ENCODE measurements at regions of chr9 and their contacts with region 1.

Region 1: GRCh38 chr9:106921341-106921899 is 58.5 kb downstream of the ZNF462 start:
- DNase-seq: no peak
- ATAC-seq: peak; percentile 91
- H3K4me3 ChIP-seq: no peak overlapping the region
- H3K27ac ChIP-seq: no peak overlapping the region
- H3K4me1 ChIP-seq: no peaks in the 10 kb centered on the region
- H3K27me3 ChIP-seq: no peaks in the 10 kb centered on the region
- CTCF ChIP-seq: no peak
- EP300 ChIP-seq: peak in 1 of 2 experiments; percentile 39; a peak in 2 of 4 replicates
- POLR2A ChIP-seq: no peak
- RAD21 ChIP-seq: no peak

Region 2: DNA sequence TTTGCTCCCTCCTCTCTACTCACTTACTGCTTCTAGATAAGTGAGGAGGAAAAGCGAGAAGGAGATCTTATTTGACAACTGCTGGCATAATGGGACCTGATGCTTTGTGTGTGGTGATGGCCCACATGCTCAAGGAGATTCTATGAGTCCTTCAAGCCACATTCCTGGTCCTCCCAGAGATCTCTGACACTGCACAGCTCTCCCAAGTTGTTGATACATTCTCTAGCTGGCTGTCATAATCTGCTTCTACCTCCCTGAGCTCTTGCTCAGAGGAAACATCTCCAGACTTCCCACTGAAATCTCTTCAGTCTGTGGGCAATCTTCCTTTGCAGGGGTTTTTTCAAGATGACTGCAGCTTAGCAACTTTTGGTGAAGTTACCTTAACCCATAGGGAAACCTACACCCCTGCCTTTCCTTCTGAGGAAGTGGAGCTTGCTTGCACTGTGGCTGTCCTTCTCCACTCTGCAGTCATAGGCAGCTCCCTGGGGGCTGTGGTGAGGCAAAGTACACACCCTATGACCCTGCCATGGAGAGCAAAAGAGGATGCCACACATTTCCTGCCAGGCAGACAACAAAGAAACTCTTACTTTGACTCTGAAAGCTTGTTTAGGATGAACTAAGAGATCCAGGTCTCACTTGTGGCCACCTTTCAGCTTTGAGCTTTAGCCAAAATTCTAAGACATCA is 1063.3 kb before region 1 on chr9:
- CTCF ChIA-PET with region 1: no interaction called
- POLR2A ChIA-PET with region 1: no interaction called
- RAD21 ChIA-PET with region 1: no interaction called
- SMC1A ChIA-PET with region 1: no interaction called
- in situ Hi-C with region 1: no loop called
- intact Hi-C with region 1: no loop called
- DNase-seq: no peak
- ATAC-seq: peak; percentile 55
- H3K4me3 ChIP-seq: no peak overlapping the region
- H3K27ac ChIP-seq: no peak overlapping the region
- H3K4me1 ChIP-seq: no peaks in the 10 kb centered on the region
- H3K27me3 ChIP-seq: no peaks in the 10 kb centered on the region
- CTCF ChIP-seq: no peak
- EP300 ChIP-seq: no peak
- POLR2A ChIP-seq: no peak
- RAD21 ChIP-seq: no peak

Region 3: DNA sequence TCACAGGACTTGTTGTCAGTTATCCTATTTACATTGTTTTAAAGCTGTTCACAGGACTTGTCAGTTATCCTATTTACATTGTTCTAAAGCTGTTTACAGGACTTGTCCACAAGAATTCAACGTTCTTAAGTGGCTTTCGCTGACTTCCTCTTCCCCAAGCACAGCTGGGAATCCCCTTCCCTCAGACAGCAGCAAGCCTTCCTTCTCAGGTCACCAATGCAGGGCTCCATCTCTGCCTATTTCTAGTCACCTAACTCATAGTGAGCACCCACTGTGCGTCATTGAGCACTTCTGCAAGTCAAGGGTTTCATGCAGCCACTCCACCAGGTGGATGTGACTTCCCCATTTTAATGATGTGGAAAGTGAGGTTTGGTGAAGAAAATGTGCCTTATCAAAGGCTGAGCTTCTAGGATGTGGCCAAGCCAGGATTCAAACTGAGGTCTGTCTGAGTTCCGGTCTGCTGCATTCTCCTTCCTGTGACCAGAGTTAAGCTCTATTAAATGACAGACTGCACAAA is 168.2 kb before region 1 on chr9:
- CTCF ChIA-PET with region 1: no interaction called
- POLR2A ChIA-PET with region 1: no interaction called
- RAD21 ChIA-PET with region 1: interaction called, 3 read pairs
- SMC1A ChIA-PET with region 1: no interaction called
- in situ Hi-C with region 1: no loop called
- intact Hi-C with region 1: loop called (anchors 10 kb)
- DNase-seq: peak; percentile 97
- ATAC-seq: peak; percentile 97
- H3K4me3 ChIP-seq: no peak overlapping the region
- H3K27ac ChIP-seq: peak overlapping the region; percentile 47
- H3K4me1 ChIP-seq: peaks cover 15% of the 10 kb centered on the region
- H3K27me3 ChIP-seq: no peaks in the 10 kb centered on the region
- CTCF ChIP-seq: no peak
- EP300 ChIP-seq: peak; percentile 95 to 96; a peak in 3 of 4 replicates
- POLR2A ChIP-seq: no peak
- RAD21 ChIP-seq: no peak

Region 4: DNA sequence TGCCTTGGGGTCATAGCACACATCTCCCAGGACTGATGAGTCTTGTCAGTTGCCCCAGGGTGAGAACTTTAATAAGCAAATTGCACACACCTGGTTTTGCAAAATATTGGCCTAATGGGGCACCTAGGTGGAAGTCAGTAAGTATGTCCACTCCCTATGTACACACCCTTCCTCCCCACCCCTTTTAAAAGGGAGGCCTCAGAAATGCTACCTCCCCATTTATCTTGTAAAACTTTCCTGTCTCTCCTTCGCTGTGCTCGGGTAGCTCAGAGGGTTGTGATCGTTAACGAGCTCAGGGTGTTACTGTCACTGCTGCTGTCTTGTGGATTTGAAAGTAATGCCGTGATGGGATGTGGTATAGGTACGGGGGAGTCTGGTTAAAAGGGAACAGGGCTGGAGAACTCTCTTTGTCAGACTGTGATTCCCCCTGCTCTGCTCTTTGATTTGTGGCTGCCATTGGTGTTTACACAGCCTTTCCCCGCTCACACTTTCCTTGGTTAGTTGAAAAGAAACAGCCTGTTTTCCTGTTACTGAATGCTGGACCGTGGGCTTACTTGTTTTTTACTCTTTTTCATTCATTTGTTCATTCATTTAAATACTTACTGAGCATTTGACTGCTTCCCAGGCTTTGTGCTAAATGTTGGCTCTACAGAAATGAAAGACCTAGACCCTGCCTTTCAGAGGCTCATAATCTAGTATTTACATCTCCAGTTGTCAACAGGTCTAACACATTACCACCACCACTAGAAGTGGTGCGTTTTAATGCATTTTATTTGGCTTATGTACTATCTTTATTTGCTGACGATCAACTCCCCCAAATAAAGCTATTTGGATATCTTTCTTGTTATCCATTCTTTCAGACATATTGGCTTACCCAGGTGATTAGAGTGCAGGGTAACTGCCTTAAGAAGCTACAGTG is 32.1 kb before region 1 on chr9:
- CTCF ChIA-PET with region 1: interaction called, 5 read pairs
- POLR2A ChIA-PET with region 1: no interaction called
- RAD21 ChIA-PET with region 1: interaction called, 9 read pairs
- SMC1A ChIA-PET with region 1: interaction called, 14 read pairs
- in situ Hi-C with region 1: no loop called
- intact Hi-C with region 1: no loop called
- DNase-seq: no peak
- ATAC-seq: peak; percentile 66
- H3K4me3 ChIP-seq: no peak overlapping the region
- H3K27ac ChIP-seq: no peak overlapping the region
- H3K4me1 ChIP-seq: no peaks in the 10 kb centered on the region
- H3K27me3 ChIP-seq: no peaks in the 10 kb centered on the region
- CTCF ChIP-seq: no peak
- EP300 ChIP-seq: no peak
- POLR2A ChIP-seq: no peak
- RAD21 ChIP-seq: no peak

Region 5: GRCh38 chr9:106945727-106946660 is 24.6 kb after region 1 on chr9:
- CTCF ChIA-PET with region 1: interaction called, 3 read pairs
- POLR2A ChIA-PET with region 1: no interaction called
- RAD21 ChIA-PET with region 1: interaction called, 6 read pairs
- SMC1A ChIA-PET with region 1: interaction called, 25 read pairs
- in situ Hi-C with region 1: no loop called
- intact Hi-C with region 1: no loop called
- DNase-seq: no peak
- ATAC-seq: no peak
- H3K4me3 ChIP-seq: no peak overlapping the region
- H3K27ac ChIP-seq: no peak overlapping the region
- H3K4me1 ChIP-seq: no peaks in the 10 kb centered on the region
- H3K27me3 ChIP-seq: no peaks in the 10 kb centered on the region
- CTCF ChIP-seq: no peak
- EP300 ChIP-seq: no peak
- POLR2A ChIP-seq: no peak
- RAD21 ChIP-seq: no peak

Region 6: DNA sequence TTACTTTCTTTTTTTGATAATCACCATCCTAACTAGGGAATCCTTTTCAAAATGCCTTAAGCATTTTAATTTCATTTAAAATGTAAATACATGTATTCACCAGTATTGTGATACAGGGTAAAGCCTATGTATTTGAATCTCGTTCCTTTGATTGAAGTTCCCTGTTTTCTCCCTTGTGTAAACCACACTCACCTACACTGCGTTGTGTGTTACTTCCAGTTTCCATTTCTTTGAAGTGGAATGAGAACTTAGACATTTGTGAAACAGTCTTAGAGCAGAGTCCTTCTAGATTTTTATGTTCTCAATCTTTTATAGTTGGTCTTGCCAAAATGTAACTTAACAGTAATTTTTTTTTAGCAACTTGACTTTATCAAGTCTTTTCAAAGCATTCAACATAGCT is 42.9 kb after region 1 on chr9:
- CTCF ChIA-PET with region 1: interaction called, 3 read pairs
- POLR2A ChIA-PET with region 1: no interaction called
- RAD21 ChIA-PET with region 1: interaction called, 8 read pairs
- SMC1A ChIA-PET with region 1: interaction called, 10 read pairs
- in situ Hi-C with region 1: no loop called
- intact Hi-C with region 1: no loop called
- DNase-seq: peak; percentile 44
- ATAC-seq: peak; percentile 96
- H3K4me3 ChIP-seq: no peak overlapping the region
- H3K27ac ChIP-seq: no peak overlapping the region
- H3K4me1 ChIP-seq: no peaks in the 10 kb centered on the region
- H3K27me3 ChIP-seq: no peaks in the 10 kb centered on the region
- CTCF ChIP-seq: no peak
- EP300 ChIP-seq: peak in 1 of 2 experiments; percentile 86; a peak in 3 of 4 replicates
- POLR2A ChIP-seq: no peak
- RAD21 ChIP-seq: no peak

Region 7: DNA sequence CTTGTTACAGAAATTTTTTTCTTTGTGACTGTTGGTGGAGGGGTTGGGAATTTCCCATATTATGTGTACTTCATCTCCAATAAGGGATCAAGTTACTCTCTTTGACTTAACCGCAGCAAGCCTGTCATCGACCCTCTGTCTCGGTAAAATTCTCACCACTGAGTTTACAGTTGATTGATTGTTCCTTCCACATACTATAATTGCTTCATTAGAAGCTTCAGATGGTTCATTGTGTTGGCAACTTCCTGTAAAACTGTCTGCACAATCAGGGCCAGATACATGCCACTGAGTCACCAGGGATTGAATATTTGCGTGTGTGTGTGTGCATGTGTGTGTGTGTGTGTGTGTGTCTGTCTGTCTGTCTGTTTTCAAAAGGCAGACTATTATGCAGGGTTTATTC is 118.1 kb after region 1 on chr9:
- CTCF ChIA-PET with region 1: interaction called, 3 read pairs
- POLR2A ChIA-PET with region 1: no interaction called
- RAD21 ChIA-PET with region 1: no interaction called
- SMC1A ChIA-PET with region 1: interaction called, 13 read pairs
- in situ Hi-C with region 1: no loop called
- intact Hi-C with region 1: loop called (anchors 5 kb)
- DNase-seq: peak; percentile 74
- ATAC-seq: peak; percentile 69
- H3K4me3 ChIP-seq: no peak overlapping the region
- H3K27ac ChIP-seq: no peak overlapping the region
- H3K4me1 ChIP-seq: no peaks in the 10 kb centered on the region
- H3K27me3 ChIP-seq: no peaks in the 10 kb centered on the region
- CTCF ChIP-seq: no peak
- EP300 ChIP-seq: peak in 1 of 2 experiments; percentile 62; a peak in 1 of 4 replicates
- POLR2A ChIP-seq: no peak
- RAD21 ChIP-seq: no peak